Left ventricle myocardium superior (tissue), 1 donor: ENCODE measurements at regions of chr4 and their contacts with region 1.

Region 1: GRCh38 chr4:124331781-124332180 is 380.8 kb downstream of the ANKRD50 start:
- DNase-seq: no peak
- ATAC-seq: no peak

Region 2: DNA sequence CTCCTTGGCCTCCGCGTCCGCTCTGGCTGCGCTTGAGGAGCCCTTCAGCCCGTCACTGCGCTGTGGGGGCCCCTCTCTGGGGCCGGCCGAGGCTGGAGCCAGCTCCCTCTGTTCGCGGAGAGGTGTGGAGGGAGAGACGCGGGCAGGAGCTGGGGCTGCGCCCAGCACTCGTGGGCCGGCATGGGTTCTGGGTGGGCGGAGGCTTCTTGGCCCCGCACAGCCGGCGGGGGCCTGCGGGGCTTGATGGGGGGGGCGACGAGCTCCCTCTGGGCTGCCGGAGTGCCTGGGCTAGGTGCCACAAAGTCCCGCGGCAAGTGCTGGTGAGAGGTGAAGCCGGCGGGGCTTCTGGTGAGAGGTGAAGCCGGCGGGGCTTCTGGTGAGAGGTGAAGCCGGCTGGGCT is 318.8 kb after region 1 on chr4:
- intact Hi-C with region 1: no loop called
- DNase-seq: peak; percentile 25
- ATAC-seq: no peak

Region 3: DNA sequence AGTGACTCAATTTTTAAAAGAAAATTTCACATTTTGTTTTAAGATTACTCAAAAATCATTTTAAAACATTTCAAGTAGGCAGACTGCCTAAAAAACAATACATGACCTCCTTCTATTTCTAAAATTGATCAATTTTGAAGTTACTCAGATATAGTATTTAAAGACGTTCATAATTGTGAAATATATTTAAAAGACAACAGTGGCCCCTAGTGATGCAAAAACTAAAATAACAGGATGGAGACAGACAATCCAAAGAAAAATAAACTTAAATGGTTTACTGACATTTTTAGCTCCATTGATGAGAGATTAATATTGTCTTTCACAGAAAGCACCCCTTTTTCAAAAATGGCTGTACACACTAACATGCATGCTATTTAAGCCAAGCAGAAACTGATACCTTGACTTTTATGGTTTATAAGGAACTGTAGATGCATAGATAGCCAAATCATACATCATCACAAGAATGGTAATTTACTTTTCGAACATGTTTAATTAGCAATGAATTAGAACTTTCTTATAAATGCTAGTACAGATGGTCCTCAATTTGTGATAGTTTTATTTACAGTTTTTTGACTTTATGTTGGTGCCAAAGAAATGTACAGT is 913.2 kb after region 1 on chr4:
- intact Hi-C with region 1: loop called (anchors 2 kb)
- DNase-seq: no peak
- ATAC-seq: no peak